IMR-90 (cell line): ENCODE measurements at regions of chr19 and their contacts with region 1.

Region 1: DNA sequence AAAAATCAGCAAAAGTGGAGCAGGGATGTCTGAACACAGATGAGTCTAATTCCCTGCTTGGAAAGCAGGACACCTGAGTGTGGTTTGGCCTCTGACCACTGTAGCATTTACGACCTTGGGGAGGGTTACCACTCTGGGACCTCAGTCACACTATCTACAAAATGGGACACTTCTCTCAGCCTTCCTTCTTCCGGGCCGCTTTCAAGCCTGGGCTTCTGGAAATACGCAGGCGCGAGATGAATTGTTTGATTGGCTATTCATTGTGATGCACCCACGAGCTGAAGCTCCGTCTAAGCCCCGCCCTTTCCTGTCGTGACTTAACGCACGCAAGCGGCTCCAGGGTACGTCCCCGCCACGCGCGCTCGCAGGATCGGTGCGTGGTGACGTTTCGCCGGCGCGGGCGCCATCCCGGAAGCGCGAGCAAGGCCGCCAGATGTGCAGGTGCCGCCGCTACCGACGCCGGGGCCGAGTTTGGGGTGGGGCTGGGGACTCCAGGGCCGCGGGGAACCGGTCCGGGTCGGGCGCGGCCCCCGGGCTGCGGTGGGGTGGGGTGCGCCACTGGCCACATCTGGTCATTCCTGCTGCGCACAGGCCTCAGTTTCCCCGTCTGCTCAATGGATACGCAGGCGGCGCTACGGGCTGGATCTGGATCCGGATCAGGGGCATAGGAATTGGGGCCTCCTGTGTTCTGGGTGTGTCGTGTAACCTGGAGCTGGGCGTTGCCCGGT is at the start of gene KXD1:
- DNase-seq: peak; percentile 99
- ATAC-seq: peak; percentile 100
- H3K4me3 ChIP-seq: peak within 1 kb of the TSS; percentile 76
- H3K27ac ChIP-seq: peak within 1 kb of the TSS; percentile 65
- H3K4me1 ChIP-seq: 0 out of 2 replicates have a peak, but pooled peaks cover 2% of the 10 kb centered on the region
- H3K27me3 ChIP-seq: no peaks in the 10 kb centered on the region
- CTCF ChIP-seq: no peak
- POLR2A ChIP-seq: peak; percentile 72
- RAD21 ChIP-seq: no peak
- total RNA-seq, gene KXD1: 66.7 and 89.2 TPM in 2 replicates

Region 2: DNA sequence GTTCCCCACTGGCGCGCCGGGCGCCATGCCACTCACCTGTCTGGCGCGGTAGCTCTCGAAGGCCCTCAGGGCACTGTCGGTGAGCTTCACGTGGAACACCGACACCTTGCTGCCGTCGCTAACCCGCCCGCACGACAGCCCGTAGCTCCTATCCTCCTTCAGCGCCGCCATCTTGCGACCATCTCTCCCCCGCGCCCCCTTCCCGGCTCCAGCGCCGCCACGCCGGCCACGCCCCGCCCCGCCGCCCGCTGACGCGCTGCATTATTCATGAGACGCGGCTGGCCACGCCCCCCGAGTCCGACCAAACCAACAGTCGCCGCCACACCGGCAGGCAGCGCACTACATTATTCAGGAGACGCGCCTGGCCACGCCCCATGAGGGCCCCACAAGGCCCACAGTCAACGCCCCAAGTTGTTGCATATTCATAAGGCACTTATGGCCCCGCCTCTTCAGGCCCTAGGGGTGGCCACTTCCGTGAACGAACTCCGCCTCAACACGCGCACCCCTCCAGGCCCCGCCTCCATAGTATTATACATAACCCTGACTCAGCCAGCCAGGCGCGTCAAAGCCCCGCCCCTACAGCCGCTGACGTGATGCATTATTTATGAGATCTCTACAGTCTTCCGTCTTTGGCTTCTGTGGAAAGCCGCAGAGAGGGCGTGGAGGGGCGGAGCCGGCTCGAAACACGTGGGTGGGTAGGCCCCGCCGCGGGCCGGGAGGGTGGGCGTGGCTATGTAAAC is 35.6 kb before region 1 on chr19 and contains the start of gene ELL:
- CTCF ChIA-PET with region 1: interaction called, 5 read pairs
- POLR2A ChIA-PET with region 1: interaction called, 3 read pairs
- dilution Hi-C with region 1: no loop called
- in situ Hi-C with region 1: no loop called
- intact Hi-C with region 1: loop called (anchors 1 kb)
- DNase-seq: peak; percentile 100
- ATAC-seq: peak; percentile 90
- H3K4me3 ChIP-seq: peak within 1 kb of the TSS; percentile 92
- H3K27ac ChIP-seq: peak within 1 kb of the TSS; percentile 94
- H3K4me1 ChIP-seq: peaks cover 2% of the 10 kb centered on the region; the same call in 1 of the 2 replicates
- H3K27me3 ChIP-seq: no peaks in the 10 kb centered on the region
- CTCF ChIP-seq: peak; percentile 34
- POLR2A ChIP-seq: peak; percentile 98
- RAD21 ChIP-seq: no peak
- total RNA-seq, gene ELL: 6.3 and 6.7 TPM in 2 replicates

Region 3: GRCh38 chr19:18532168-18532890 is 25.3 kb before region 1 on chr19:
- CTCF ChIA-PET with region 1: no interaction called
- POLR2A ChIA-PET with region 1: no interaction called
- dilution Hi-C with region 1: no loop called
- in situ Hi-C with region 1: no loop called
- intact Hi-C with region 1: no loop called
- DNase-seq: no peak
- ATAC-seq: no peak
- H3K4me3 ChIP-seq: no peak overlapping the region
- H3K27ac ChIP-seq: no peak overlapping the region
- H3K4me1 ChIP-seq: no peaks in the 10 kb centered on the region
- H3K27me3 ChIP-seq: no peaks in the 10 kb centered on the region
- CTCF ChIP-seq: no peak
- POLR2A ChIP-seq: no peak
- RAD21 ChIP-seq: no peak

Region 4: GRCh38 chr19:18649371-18650020 is 91.9 kb after region 1 on chr19:
- CTCF ChIA-PET with region 1: no interaction called
- POLR2A ChIA-PET with region 1: interaction called, 16 read pairs
- dilution Hi-C with region 1: no loop called
- in situ Hi-C with region 1: no loop called
- intact Hi-C with region 1: no loop called
- DNase-seq: peak; percentile 70
- ATAC-seq: peak; percentile 54
- H3K4me3 ChIP-seq: no peak overlapping the region
- H3K27ac ChIP-seq: peak overlapping the region; percentile 71
- H3K4me1 ChIP-seq: peaks cover 37% of the 10 kb centered on the region
- H3K27me3 ChIP-seq: no peaks in the 10 kb centered on the region
- CTCF ChIP-seq: no peak
- POLR2A ChIP-seq: 0 out of 2 replicates have a peak, but pooled peaks have one; percentile 14
- RAD21 ChIP-seq: no peak

Region 5: GRCh38 chr19:18999896-19000620 is 442.4 kb after region 1 on chr19:
- CTCF ChIA-PET with region 1: no interaction called
- POLR2A ChIA-PET with region 1: no interaction called
- dilution Hi-C with region 1: no loop called
- in situ Hi-C with region 1: no loop called
- intact Hi-C with region 1: no loop called
- DNase-seq: peak; percentile 10
- ATAC-seq: no peak
- H3K4me3 ChIP-seq: no peak overlapping the region
- H3K27ac ChIP-seq: no peak overlapping the region
- H3K4me1 ChIP-seq: peaks cover 7% of the 10 kb centered on the region
- H3K27me3 ChIP-seq: no peaks in the 10 kb centered on the region
- CTCF ChIP-seq: 0 out of 2 replicates have a peak, but pooled peaks have one; percentile 24
- POLR2A ChIP-seq: no peak
- RAD21 ChIP-seq: no peak